GM18951 (cell line): ENCODE measurements at regions of chr10 and their contacts with region 1.

Region 1: GRCh38 chr10:80158598-80159127 is 26.1 kb downstream of the PLAC9 start:
- POLR2A ChIP-seq: no peak

Region 2: DNA sequence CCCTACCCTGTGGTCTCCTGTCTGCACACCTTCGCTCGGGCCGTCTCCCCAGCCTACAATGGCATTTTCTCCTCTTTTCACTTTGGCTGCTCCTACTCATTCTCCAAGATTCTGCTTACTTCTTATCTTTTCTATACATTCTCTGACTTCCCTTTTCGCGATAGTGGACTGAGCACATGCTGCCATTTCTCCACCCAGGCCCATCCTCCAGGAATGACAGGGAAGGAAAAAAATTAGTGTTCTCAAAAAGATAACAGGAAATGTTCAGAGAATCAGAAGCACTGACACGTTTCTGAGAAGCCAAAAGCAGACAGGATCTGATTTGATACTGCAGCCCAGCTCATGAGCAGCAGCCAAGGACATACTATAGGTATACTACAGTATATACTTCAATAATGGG is 53.1 kb after region 1 on chr10:
- in situ Hi-C with region 1: loop called (anchors 10 kb)
- POLR2A ChIP-seq: no peak